ENCODE measurements at regions of chr14 and their contacts with region 1.

Region 1: DNA sequence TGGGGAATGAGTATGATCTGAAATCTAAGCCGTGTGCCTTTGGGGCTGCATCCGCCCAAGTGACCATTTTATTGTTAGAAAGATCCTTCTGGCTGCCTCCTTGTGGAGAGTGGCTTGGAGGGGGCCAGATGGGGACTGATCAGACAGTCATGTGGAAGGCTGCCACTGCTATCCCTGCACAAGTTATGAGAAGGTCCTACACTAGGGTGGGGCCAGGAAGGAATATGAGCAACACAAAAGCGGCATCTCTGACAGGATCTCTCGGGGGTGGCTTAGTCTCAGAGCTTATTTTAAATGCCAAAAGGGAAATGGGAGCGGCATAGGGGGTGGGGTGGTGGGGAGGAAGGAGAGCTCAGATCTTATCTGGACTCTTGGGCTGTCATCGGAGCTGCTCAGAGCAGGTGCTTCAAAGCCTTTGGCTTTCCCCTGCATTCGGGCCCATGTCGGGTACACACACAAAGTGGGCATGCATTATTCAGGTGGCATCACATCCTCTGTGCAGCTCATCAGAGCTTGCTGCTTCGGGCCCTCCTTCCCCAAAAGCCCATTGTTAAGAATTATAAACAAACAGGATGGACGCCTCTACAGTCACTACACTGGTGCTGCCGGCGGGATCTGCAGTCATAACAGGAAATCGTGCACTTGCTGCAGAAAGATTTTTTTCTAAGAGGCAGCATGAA is 805.4 kb downstream of the VRK1 start:
- DNase-seq: peak; percentile 83 to 94 (median 88)
- H3K4me3 ChIP-seq: peak overlapping the region; percentile 5 to 21
- H3K4me3 Mint-ChIP-seq: no peak overlapping the region
- H3K27ac ChIP-seq: peak overlapping the region; percentile 72
- H3K27ac Mint-ChIP-seq: no peak overlapping the region
- H3K4me1 ChIP-seq: peaks cover 69% of the 10 kb centered on the region
- H3K4me1 Mint-ChIP-seq: peaks cover 4 to 41% (median 19%) of the 10 kb centered on the region in 4 donors
- H3K27me3 ChIP-seq: no peaks in the 10 kb centered on the region
- H3K27me3 Mint-ChIP-seq: no peaks in the 10 kb centered on the region

Region 2: GRCh38 chr14:97177015-97177414 is 425.6 kb before region 1 on chr14:
- CTCF ChIA-PET with region 1: interaction called, 7 read pairs
- POLR2A ChIA-PET with region 1: no interaction called
- intact Hi-C with region 1: loop called (anchors 2 kb)
- DNase-seq: peak; percentile 46 to 53 (median 50)
- H3K4me3 ChIP-seq: no peak overlapping the region
- H3K4me3 Mint-ChIP-seq: peak overlapping the region in 1 of 8 donors; percentile 23
- H3K27ac ChIP-seq: no peak overlapping the region
- H3K27ac Mint-ChIP-seq: peak overlapping the region in 3 of 7 donors; percentile 4 to 71 (median 34)
- H3K4me1 ChIP-seq: peaks cover 3% of the 10 kb centered on the region
- H3K4me1 Mint-ChIP-seq: peaks cover 19 to 43% (median 23%) of the 10 kb centered on the region in 4 donors
- H3K27me3 ChIP-seq: no peaks in the 10 kb centered on the region
- H3K27me3 Mint-ChIP-seq: peaks cover 0 to 1% of the 10 kb centered on the region in 2 donors

Region 3: GRCh38 chr14:97380539-97380941 is 222.0 kb before region 1 on chr14:
- CTCF ChIA-PET with region 1: no interaction called
- POLR2A ChIA-PET with region 1: interaction called, 13 read pairs
- intact Hi-C with region 1: no loop called
- DNase-seq: peak in 1 of 5 donors; percentile 54
- H3K4me3 ChIP-seq: no peak overlapping the region
- H3K4me3 Mint-ChIP-seq: peak overlapping the region in 7 of 8 donors; percentile 28 to 89 (median 76)
- H3K27ac ChIP-seq: no peak overlapping the region
- H3K27ac Mint-ChIP-seq: peak overlapping the region in 6 of 7 donors; percentile 9 to 91 (median 66)
- H3K4me1 ChIP-seq: peaks cover 44% of the 10 kb centered on the region
- H3K4me1 Mint-ChIP-seq: peaks cover 41 to 66% (median 53%) of the 10 kb centered on the region in 4 donors
- H3K27me3 ChIP-seq: no peaks in the 10 kb centered on the region
- H3K27me3 Mint-ChIP-seq: no peaks in the 10 kb centered on the region

Region 4: DNA sequence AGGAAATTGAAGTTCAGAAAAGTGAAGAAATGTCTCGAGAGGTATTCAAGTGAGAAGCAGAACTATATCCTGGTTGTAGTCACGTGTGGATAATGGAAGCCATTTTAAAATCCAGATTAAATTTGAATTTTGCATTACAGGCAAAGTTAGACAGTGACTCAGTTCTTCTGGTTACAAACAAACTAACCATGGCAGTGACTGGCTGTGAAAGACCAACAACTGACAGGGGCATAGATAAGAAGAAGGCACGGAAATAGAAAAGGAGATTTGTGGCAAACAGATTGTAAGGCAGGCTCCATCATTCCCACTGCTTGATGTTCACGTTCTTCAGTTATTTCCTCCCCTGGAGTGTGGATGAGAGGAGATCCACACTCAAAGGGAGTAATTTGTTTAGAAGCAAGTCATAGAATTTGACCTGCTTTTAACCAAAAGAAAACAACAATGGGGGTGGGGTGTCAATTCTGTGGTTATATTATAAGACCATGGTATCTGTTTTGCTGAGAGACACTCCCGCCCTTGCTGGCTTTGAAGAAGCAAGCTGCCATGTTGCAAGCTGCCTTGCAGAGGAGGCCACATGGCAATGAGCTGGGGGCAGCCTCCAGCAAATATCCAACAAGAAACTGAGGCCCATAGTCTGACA is 10.1 kb before region 1 on chr14:
- CTCF ChIA-PET with region 1: interaction called, 6 read pairs
- POLR2A ChIA-PET with region 1: interaction called, 17 read pairs
- intact Hi-C with region 1: no loop called
- DNase-seq: peak in 4 of 5 donors; percentile 14 to 27 (median 22)
- H3K4me3 ChIP-seq: no peak overlapping the region
- H3K4me3 Mint-ChIP-seq: peak overlapping the region in 6 of 8 donors; percentile 6 to 60 (median 48)
- H3K27ac ChIP-seq: no peak overlapping the region
- H3K27ac Mint-ChIP-seq: peak overlapping the region; percentile 1 to 84 (median 78)
- H3K4me1 ChIP-seq: peaks cover 28% of the 10 kb centered on the region
- H3K4me1 Mint-ChIP-seq: peaks cover 37 to 57% (median 43%) of the 10 kb centered on the region in 4 donors
- H3K27me3 ChIP-seq: no peaks in the 10 kb centered on the region
- H3K27me3 Mint-ChIP-seq: no peaks in the 10 kb centered on the region

Region 5: DNA sequence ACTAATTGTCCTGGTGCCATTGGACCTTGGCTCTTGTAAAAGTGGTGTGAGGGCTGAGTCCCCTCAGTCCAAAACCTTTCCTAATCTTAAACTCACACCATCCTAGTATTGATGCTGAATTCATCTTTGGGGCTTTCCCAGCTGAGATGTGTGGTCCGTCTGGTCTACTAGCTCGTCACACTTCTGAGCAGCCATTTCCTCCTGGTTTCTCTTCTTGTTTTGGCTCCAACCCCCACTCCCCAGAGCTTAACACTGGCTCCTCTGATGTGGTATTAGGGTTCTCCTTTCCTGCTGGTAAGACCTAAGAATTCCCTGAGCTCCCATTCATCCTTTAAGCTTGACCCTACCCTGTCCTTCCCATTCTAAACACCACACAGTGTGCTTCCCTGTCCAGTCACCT is 95.2 kb after region 1 on chr14:
- CTCF ChIA-PET with region 1: no interaction called
- POLR2A ChIA-PET with region 1: interaction called, 25 read pairs
- intact Hi-C with region 1: no loop called
- DNase-seq: peak; percentile 26 to 63 (median 32)
- H3K4me3 ChIP-seq: no peak overlapping the region
- H3K4me3 Mint-ChIP-seq: peak overlapping the region in 7 of 8 donors; percentile 7 to 74 (median 23)
- H3K27ac ChIP-seq: no peak overlapping the region
- H3K27ac Mint-ChIP-seq: peak overlapping the region in 6 of 7 donors; percentile 61 to 92 (median 88)
- H3K4me1 ChIP-seq: peaks cover 27% of the 10 kb centered on the region
- H3K4me1 Mint-ChIP-seq: peaks cover 19 to 56% (median 40%) of the 10 kb centered on the region in 4 donors
- H3K27me3 ChIP-seq: no peaks in the 10 kb centered on the region
- H3K27me3 Mint-ChIP-seq: no peaks in the 10 kb centered on the region

Region 6: DNA sequence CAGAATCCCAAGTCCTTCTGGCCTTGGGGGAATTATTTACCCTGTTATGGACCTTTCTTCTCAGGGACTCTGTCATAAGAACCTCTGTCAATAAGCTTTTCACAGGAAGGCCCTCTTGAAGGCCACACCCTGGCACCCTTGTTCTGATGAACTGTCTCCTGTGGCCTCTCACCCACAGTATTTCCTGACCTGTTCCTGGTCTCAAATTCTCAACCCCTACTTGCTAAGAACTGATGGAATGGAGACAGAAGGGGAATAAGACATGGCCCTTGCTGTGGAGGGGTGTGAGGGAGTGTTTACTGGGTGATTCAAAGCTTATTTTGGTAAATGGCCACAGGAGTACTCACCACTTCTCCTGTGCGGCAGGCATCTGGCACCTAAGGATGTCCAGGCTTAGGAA is 586.5 kb after region 1 on chr14:
- CTCF ChIA-PET with region 1: no interaction called
- POLR2A ChIA-PET with region 1: interaction called, 4 read pairs
- intact Hi-C with region 1: loop called (anchors 2 kb)
- DNase-seq: peak in 1 of 5 donors; percentile 39
- H3K4me3 ChIP-seq: peak overlapping the region; percentile 38 to 42
- H3K4me3 Mint-ChIP-seq: peak overlapping the region; percentile 67 to 85 (median 80)
- H3K27ac ChIP-seq: peak overlapping the region; percentile 65
- H3K27ac Mint-ChIP-seq: peak overlapping the region; percentile 84 to 98 (median 94)
- H3K4me1 ChIP-seq: peaks cover 100% of the 10 kb centered on the region
- H3K4me1 Mint-ChIP-seq: peaks cover 84 to 100% (median 94%) of the 10 kb centered on the region in 4 donors
- H3K27me3 ChIP-seq: no peaks in the 10 kb centered on the region
- H3K27me3 Mint-ChIP-seq: no peaks in the 10 kb centered on the region

Measured in CD4-positive, alpha-beta memory T cell (primary cell).